Posterior cingulate gyrus (tissue), 11 donors: ENCODE measurements at regions of chr14 and their contacts with region 1.

Region 1: DNA sequence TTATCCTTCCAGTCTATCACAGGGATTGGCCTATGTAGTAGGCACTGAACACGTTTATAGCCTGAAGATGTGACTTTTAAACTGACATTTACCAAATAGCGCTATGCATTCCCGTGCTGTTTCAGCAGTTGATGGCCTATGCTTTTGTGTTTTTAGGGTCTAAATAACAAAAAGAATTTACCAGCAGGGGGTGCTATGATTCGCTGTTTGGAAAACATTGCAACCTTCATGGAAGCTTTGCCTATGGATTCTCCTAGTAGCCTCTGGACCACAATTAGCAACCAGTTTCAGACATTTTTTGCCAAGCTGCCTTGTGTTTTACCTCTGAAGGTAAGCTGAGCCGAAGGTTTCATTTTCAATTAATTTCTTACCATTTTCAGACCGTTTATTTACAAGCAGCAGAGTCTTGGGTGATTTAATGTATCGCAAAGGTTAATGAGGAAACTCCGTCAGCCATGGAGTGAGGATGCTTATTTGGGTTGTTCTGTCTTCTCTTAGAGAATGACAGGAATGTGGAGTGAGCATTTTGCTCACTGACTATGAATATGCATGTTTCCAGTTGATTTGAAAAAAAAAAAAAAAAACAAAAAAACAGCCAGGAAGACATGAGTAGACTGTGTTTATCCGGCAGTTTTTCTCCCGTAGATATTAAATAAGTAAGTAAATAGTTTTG is 133.1 kb downstream of the PRIMA1 start:
- DNase-seq: peak in 1 of 10 donors; percentile 45

Region 2: DNA sequence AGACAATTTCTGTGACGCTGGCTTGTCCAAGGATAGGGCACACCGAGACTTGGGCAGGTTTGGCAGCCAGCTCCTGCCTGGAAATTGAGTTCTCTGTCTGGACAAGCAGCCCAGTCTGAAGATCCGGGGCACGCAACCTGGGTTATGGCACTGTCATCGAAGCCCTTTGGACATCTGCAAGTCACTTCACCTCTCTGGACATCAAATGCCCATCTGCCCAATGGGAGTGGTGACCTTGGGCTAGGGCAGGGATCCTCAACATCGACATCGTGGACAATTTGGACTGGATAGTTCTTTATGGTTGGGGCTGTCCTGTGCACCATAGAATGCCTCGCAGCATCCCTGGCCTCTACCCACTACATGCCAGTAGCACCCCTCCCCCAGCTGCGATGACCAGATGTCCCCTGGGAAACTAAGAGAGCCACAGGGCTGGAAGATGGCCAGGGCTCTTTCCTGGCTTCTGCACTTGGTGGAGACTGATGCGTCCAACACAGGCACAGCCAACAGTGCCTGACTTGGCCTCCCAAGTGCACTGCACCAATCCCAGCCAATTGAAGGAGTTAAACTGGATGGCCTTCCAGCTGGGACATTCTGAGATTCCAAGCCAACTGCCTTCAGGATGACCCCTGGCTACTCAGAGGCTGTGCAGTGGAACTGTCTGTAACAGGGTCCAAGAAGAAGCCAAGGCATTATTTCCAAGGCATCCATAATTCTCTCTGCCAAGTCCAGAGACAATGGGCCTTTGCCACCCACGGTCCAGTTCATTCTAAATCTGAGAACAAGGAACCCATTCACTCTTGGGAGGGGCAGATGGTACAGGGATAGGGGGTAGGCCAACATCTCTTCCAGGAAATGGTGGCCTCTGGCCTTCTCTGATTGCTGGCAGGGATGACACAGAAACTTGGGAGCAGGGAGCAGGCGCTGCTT is 97.7 kb after region 1 on chr14:
- intact Hi-C with region 1: no loop called
- DNase-seq: peak; percentile 68 to 97 (median 85)

Region 3: DNA sequence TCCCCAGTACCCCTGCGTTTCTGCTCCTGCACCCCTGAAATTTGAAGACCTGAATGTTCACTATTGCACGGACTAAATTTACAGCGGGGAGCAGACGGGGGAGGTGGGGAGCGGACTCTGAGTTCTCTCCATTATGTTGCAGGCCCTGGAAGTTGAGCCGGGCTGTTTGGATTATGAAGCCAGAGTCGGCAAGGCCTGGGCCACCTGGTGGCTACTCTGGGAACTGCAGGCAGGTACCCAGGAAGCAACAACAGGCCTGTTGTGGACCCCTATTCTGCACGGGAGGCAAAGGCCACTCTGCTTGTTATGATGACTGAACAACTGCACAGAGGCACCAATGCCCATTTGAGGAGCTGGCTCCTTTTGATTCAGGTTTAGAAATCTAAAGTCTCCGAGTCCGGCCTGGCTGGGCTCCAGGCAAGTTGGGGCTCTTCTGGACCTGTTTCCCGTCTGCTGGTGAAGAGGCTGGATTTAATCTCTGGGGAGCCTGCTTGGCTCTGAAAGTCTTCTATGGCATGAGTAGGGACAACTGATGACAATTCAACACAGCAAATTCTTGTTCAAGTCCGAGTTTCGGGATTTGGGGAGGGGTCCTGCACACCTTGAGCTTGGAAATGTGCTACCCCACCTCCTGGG is 237.8 kb after region 1 on chr14:
- intact Hi-C with region 1: loop called (anchors 1 kb)
- DNase-seq: peak; percentile 50 to 95 (median 80)

Region 4: GRCh38 chr14:93959239-93960107 is 304.3 kb after region 1 on chr14:
- intact Hi-C with region 1: no loop called
- DNase-seq: peak in 3 of 10 donors; percentile 58 to 85 (median 79)